ENCODE measurements at regions of chr7 and their contacts with region 1.

Region 1: DNA sequence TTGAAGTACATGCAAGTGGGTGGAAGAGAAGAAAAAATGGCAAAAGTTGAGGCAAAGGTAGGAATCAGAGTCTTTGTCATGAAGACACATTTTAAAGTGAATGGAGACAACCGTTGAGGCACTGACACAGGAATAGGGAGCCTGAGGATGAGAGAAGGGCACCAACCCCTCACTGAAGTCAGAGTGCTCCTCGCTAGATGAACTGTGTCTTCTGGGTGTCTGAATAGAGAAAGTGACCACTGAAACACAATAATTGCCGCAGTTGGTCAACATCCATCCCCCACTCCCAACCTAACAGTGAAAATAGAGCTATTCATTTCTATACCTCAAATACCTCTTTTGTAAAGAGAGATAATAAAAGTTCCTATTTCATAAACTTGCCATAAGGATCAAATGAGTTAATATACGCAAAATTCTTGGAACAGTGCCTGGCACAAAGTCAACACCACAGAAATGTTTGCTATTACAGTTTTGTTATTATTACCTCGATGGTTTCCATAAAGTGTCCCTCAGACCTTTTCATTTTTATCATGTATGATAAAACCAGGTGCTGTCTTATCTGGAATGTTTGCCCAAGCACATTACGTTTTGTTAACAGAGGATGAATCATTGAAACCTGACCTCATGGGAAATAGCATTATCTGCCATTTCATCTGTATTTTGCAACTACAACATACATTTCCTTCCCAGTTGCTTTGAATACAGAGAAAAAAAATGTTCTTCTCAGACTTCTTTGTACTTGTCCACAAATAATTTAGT is 61.8 kb upstream of the SP4 start:
- DNase-seq: no peak
- ATAC-seq: no peak
- H3K4me3 ChIP-seq: no peak overlapping the region
- H3K27ac ChIP-seq: no peak overlapping the region; the same call in 1 of the 2 replicates
- H3K4me1 ChIP-seq: peaks cover 21% of the 10 kb centered on the region
- H3K27me3 ChIP-seq: no peaks in the 10 kb centered on the region
- CTCF ChIP-seq: no peak
- EP300 ChIP-seq: no peak
- POLR2A ChIP-seq: no peak
- RAD21 ChIP-seq: no peak

Region 2: GRCh38 chr7:21377545-21377944 is 11.5 kb after region 1 on chr7:
- CTCF ChIA-PET with region 1: interaction called, 4 read pairs
- POLR2A ChIA-PET with region 1: no interaction called
- RAD21 ChIA-PET with region 1: interaction called, 13 read pairs
- SMC1A ChIA-PET with region 1: interaction called, 30 read pairs
- in situ Hi-C with region 1: no loop called
- intact Hi-C with region 1: no loop called
- DNase-seq: no peak
- ATAC-seq: no peak
- H3K4me3 ChIP-seq: no peak overlapping the region
- H3K27ac ChIP-seq: no peak overlapping the region
- H3K4me1 ChIP-seq: no peaks in the 10 kb centered on the region
- H3K27me3 ChIP-seq: no peaks in the 10 kb centered on the region
- CTCF ChIP-seq: no peak
- EP300 ChIP-seq: no peak
- POLR2A ChIP-seq: no peak
- RAD21 ChIP-seq: no peak

Measured in GM12878 (cell line).